ENCODE measurements at regions of chr1 and their contacts with region 1.

Region 1: GRCh38 chr1:32013386-32014198 is at the start of gene KHDRBS1:
- DNase-seq: peak; percentile 99
- ATAC-seq: peak; percentile 90
- H3K4me3 Mint-ChIP-seq: peak within 1 kb of the TSS; percentile 97
- H3K27ac Mint-ChIP-seq: peak within 1 kb of the TSS; percentile 95
- H3K4me1 Mint-ChIP-seq: peaks cover 27% of the 10 kb centered on the region
- H3K27me3 Mint-ChIP-seq: no peaks in the 10 kb centered on the region
- total RNA-seq, gene KHDRBS1: 198 to 206 TPM

Region 2: GRCh38 chr1:31762726-31763670 is 250.6 kb before region 1 on chr1:
- CTCF ChIA-PET with region 1: no interaction called
- POLR2A ChIA-PET with region 1: interaction called, 3 read pairs
- intact Hi-C with region 1: loop called in 1 of 2 experiments (anchors 2 kb)
- DNase-seq: peak; percentile 87
- ATAC-seq: peak; percentile 65
- H3K4me3 Mint-ChIP-seq: peak overlapping the region; percentile 65
- H3K27ac Mint-ChIP-seq: no peak overlapping the region
- H3K4me1 Mint-ChIP-seq: peaks cover 26% of the 10 kb centered on the region
- H3K27me3 Mint-ChIP-seq: peaks cover 15% of the 10 kb centered on the region

Region 3: GRCh38 chr1:31938174-31938950 is 75.2 kb before region 1 on chr1 and contains the start of gene PTP4A2:
- CTCF ChIA-PET with region 1: interaction called, 4 read pairs
- POLR2A ChIA-PET with region 1: no interaction called
- intact Hi-C with region 1: loop called (anchors 2 to 5 kb)
- DNase-seq: peak; percentile 93
- ATAC-seq: peak; percentile 63
- H3K4me3 Mint-ChIP-seq: peak within 1 kb of the TSS; percentile 91
- H3K27ac Mint-ChIP-seq: peak within 1 kb of the TSS; percentile 99
- H3K4me1 Mint-ChIP-seq: peaks cover 63% of the 10 kb centered on the region
- H3K27me3 Mint-ChIP-seq: no peaks in the 10 kb centered on the region
- total RNA-seq, gene PTP4A2: 279 to 314 TPM

Region 4: DNA sequence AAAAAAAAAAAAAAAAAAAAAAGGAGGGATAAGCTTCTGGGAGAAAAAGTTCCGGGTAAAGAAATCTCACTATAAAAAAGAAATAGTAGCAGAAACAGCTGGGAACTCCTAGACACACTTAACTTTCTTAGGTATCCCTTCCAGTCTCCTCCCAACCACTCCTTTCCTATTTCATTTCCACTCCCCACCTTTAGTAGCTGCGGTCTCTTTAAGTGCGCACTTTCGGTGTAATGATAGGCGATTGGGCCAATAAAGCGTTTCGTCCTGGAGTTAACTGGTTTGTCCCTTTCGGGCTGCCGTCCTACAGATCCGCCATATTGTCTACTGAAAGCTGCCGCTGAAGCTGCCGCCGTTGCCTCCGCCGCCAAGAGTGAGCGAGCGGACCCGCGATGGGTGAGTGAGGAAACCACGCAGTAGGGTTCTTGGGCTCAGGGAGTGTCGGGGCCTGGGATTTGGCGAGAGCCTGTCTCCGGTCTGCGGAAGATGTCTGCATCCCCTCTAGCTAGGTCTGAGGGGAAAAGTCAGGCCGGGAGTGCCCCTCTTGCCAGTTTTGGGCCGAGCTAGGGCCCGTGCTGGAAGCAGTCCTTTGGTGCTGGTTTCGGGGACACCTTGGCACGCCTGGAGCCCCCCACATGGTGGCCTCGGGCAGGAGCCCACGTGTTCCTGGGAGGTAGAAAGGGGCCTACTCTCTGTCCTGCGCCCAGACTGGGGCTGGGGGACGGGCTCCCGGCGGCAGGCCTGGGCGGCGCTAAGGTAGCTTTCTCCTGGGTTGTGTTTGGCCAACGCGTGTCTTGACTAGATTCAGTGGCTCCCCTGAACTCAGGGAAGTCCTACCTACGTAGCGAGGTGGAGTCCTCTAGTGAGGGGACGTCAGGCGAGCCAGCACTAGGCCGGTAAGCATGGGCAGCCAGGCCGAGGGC is 94.4 kb after region 1 on chr1 and contains the start of gene KPNA6:
- CTCF ChIA-PET with region 1: interaction called, 3 read pairs
- POLR2A ChIA-PET with region 1: interaction called, 7 read pairs
- intact Hi-C with region 1: loop called in 1 of 2 experiments (anchors 1 kb)
- DNase-seq: peak; percentile 94
- ATAC-seq: peak; percentile 77
- H3K4me3 Mint-ChIP-seq: peak within 1 kb of the TSS; percentile 88
- H3K27ac Mint-ChIP-seq: peak within 1 kb of the TSS; percentile 96
- H3K4me1 Mint-ChIP-seq: peaks cover 39% of the 10 kb centered on the region
- H3K27me3 Mint-ChIP-seq: no peaks in the 10 kb centered on the region
- total RNA-seq, gene KPNA6: 70.0 to 78.3 TPM

Region 5: GRCh38 chr1:32221980-32222755 is 208.6 kb after region 1 on chr1 and contains the starts of genes EIF3I and TMEM234:
- CTCF ChIA-PET with region 1: no interaction called
- POLR2A ChIA-PET with region 1: no interaction called
- intact Hi-C with region 1: loop called in 1 of 2 experiments (anchors 1 kb)
- DNase-seq: peak; percentile 95
- ATAC-seq: peak; percentile 95
- H3K4me3 Mint-ChIP-seq: peak within 1 kb of the TSS; percentile 96
- H3K27ac Mint-ChIP-seq: peak within 1 kb of the TSS; percentile 97
- H3K4me1 Mint-ChIP-seq: peaks cover 29% of the 10 kb centered on the region
- H3K27me3 Mint-ChIP-seq: no peaks in the 10 kb centered on the region
- total RNA-seq, gene EIF3I: 299 to 349 TPM
- total RNA-seq, gene TMEM234: 7.3 to 8.2 TPM

Region 6: DNA sequence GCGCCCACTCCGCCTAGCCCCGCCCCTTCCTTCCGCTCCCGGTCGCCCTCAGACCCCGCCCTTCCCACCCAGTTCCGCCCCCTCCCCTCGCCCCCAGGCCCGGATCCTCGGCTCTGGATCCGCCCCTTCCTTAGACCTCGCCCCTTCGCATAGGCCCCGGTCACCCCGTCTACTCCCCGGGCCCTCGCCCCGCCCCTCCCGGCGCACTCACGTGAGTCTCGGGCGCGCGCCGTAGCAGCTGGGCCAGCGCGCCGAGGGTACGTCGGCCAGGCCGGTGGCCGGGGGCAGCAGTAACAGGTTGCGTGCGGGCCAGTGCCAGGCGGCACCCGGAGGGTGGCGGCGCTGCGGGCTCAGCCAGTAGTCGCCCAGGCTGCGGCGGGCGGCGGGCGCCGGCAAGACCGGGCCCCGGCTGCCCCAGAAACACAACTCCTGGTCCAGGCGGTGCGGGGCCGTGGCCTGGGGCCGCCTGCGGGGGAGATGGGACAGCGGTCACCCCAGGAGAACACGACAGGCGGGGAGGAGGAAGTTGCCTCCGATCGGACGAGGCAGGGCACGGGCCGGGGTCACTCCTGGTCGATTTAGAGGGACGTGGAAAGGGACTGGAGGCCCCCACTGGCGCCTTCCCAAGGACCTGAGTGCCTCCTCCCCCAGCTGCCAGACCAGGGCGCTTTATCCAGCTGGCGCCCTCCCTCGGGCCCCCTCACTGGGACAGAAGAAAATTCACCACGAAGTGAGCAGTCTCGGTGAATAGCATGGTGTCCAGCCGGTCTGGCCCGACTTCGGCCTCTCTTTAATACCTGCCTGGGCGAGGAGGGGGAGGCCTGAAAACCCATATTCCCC is 338.0 kb after region 1 on chr1:
- CTCF ChIA-PET with region 1: no interaction called
- POLR2A ChIA-PET with region 1: no interaction called
- intact Hi-C with region 1: loop called in 1 of 2 experiments (anchors 1 kb)
- DNase-seq: peak; percentile 96
- ATAC-seq: peak; percentile 96
- H3K4me3 Mint-ChIP-seq: peak overlapping the region; percentile 73
- H3K27ac Mint-ChIP-seq: peak overlapping the region; percentile 82
- H3K4me1 Mint-ChIP-seq: peaks cover 20% of the 10 kb centered on the region
- H3K27me3 Mint-ChIP-seq: no peaks in the 10 kb centered on the region

Region 7: DNA sequence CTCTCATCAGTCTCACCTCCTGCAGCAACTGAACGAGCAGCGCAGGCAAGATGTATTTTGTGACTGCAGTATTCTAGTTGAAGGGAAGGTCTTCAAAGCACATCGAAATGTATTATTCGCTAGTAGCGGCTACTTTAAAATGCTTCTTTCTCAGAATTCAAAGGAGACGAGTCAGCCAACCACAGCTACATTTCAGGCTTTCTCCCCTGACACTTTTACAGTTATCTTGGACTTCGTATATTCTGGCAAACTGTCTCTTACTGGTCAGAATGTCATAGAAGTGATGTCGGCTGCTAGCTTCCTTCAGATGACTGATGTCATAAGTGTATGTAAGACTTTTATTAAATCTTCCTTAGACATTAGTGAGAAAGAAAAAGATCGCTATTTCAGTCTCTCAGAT is 579.4 kb after region 1 on chr1:
- CTCF ChIA-PET with region 1: no interaction called
- POLR2A ChIA-PET with region 1: no interaction called
- intact Hi-C with region 1: no loop called
- DNase-seq: no peak
- ATAC-seq: no peak
- H3K4me3 Mint-ChIP-seq: no peak overlapping the region
- H3K27ac Mint-ChIP-seq: no peak overlapping the region
- H3K4me1 Mint-ChIP-seq: no peaks in the 10 kb centered on the region
- H3K27me3 Mint-ChIP-seq: peaks cover 2% of the 10 kb centered on the region